Left colon (tissue), 2 donors: ENCODE measurements at regions of chr11 and their contacts with region 1.

Region 1: GRCh38 chr11:19553683-19554333 is 158.8 kb upstream of the NAV2 start:
- DNase-seq: peak; percentile 70 to 91
- ATAC-seq: peak; percentile 64

Region 2: GRCh38 chr11:19071255-19071654 is 482.6 kb before region 1 on chr11:
- intact Hi-C with region 1: loop called in 1 of 2 experiments (anchors 5 kb)
- DNase-seq: peak; percentile 70 to 76
- ATAC-seq: peak; percentile 70

Region 3: DNA sequence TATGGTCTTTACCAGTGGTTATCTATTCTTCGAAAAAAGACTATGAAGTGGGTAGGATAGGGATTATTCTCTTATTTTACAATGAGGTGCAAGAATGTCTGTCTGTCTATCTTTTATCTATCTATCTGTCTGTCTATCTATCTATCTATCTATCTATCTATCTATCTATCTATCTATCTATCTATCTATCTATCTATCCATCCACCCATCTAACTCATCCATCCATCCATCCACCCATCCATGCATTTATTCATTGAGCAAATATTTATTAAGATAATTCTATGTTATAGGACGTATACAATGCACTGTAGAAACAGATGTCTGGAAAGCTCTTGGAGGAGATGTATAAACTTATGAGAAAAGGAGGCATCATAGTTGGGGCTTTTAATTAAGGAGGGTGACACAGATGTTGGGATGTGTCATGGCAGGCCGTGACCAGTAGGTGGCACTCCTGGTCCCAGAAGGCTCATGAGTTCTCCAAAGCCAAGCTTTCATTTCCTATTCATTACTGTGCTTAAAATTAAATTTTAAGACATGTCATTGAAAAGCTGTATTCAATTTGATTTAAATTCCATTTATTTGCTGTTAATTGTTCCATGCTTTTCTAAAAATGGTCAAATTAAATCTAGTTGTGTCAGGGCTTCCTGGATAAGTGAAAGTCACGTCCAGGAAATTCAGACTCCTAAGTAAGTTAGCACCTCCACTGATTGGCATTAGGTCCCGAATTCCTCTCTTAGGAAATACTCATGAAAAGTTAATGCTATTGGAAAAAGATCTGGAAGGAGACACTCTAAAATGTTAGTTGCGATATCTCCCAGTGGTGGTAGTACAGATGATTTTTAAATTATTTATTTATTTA is 294.1 kb before region 1 on chr11:
- intact Hi-C with region 1: loop called in 1 of 2 experiments (anchors 10 kb)
- DNase-seq: peak; percentile 41 to 79
- ATAC-seq: peak; percentile 78

Region 4: DNA sequence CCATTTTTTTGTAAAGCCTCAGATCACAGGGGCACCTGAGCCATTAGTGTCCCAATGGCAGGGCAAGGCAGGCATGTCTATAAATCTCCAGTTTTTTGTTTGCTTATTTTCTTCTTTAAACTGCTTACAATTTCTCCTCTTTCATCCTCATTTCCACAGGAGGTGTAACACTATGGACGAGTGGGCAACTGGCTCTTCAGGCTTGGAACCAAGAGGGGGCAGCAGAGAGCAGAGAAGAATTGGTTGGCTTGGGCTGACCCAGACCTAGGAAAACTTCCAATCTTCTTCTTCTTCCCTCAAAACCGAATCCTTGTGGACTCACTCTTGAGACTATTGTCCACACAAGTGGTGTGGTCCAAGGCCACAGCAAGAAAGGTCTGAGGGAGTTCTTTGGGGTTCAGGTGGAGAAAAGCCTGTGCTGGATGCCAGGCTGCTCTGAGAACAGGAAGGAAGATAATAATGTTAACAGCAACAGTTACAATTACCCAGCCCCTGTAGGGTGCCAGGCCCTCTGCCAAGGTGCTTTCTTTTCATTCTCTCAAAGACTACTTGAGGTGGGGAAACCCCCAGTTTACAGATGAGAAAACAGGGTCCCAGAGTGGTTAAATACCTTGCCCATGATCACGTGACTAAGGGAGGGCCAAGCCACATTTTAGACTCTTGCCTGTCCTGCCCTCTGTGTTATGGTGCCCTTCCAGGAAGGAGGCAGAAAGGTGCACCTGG is 242.3 kb before region 1 on chr11:
- intact Hi-C with region 1: loop called (anchors 5 to 10 kb)
- DNase-seq: peak; percentile 33 to 79
- ATAC-seq: peak; percentile 78

Region 5: DNA sequence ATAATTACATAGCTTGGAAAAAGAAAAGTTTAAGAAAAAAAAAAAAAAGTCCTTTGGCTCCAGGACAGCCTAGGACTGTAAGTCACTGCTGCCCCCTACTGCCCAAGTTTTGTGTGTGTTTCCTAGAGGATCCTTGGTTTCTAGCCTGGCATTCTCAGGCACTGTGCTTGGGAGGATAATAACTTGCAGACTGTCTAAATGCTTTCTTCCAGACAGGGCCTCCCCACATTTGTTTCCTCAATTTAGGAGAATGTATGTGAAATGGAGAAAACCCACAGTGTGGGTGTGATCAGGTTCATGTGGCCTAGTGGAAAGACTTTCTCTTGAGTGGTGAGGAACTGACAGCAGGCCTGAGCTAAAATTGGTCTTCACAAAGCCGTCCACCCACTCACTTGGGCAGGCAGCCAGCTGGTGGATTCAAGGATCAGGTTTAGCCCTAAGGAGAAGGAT is 349.8 kb after region 1 on chr11:
- intact Hi-C with region 1: loop called in 1 of 2 experiments (anchors 5 kb)
- DNase-seq: peak; percentile 55 to 87
- ATAC-seq: peak; percentile 84

Region 6: DNA sequence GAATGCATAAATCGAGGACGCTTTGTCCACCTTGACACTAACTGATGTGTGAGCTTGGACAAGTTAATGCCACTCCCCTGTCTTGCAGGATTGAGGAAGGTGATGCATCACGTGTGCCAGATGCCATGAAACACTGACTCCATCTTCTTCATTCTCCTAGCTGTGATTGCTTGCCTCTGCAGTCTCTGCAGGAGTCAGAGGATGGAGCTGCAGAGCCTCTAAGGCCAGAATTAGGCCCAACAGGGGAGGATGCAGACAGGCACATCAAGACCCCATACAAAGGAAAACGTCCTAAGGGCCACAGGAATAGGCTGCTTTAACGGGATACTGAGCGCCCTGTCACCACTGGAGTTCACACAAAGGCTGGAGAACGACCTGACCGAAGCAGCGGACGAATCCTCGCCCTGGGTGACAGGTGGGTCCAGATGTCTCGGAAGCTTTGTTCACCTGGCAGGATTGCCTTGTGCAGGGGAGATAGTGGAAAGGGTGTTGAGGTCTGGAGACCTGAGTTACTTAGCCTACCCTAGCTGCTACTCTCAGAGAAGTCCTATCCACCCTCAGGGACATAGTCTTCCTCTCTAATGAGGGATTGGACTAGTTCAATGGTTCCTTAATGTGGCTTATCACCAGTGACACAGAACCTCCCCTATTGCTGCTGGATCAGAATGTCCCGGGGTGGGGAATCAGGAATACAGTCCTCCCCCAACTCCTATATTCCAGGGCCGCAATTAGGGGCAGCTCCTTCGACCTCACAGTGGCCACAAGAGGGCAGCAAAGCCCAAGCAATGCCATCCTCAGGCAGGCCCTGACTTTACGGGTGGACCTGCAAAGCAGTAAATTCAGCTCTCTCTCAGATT is 574.1 kb after region 1 on chr11:
- intact Hi-C with region 1: loop called in 1 of 2 experiments (anchors 5 kb)
- DNase-seq: peak; percentile 61 to 86
- ATAC-seq: peak; percentile 75